ENCODE measurements at regions of chr17 and their contacts with region 1.

Region 1: GRCh38 chr17:59846394-59847165 is 46.2 kb downstream of the TUBD1 start:
- DNase-seq: peak; percentile 91
- H3K4me3 Mint-ChIP-seq: peak overlapping the region; percentile 50
- H3K27ac Mint-ChIP-seq: peak overlapping the region; percentile 98
- H3K4me1 Mint-ChIP-seq: peaks cover 26% of the 10 kb centered on the region
- H3K27me3 Mint-ChIP-seq: no peaks in the 10 kb centered on the region
- CTCF ChIP-seq: no peak

Region 2: GRCh38 chr17:59707114-59707970 is 139.2 kb before region 1 on chr17 and contains the starts of genes PTRH2 and VMP1:
- CTCF ChIA-PET with region 1: interaction called, 3 read pairs
- POLR2A ChIA-PET with region 1: interaction called, 26 read pairs
- intact Hi-C with region 1: loop called (anchors 5 kb)
- DNase-seq: peak; percentile 99
- H3K4me3 Mint-ChIP-seq: peak within 1 kb of the TSS; percentile 94
- H3K27ac Mint-ChIP-seq: peak within 1 kb of the TSS; percentile 99
- H3K4me1 Mint-ChIP-seq: peaks cover 21% of the 10 kb centered on the region
- H3K27me3 Mint-ChIP-seq: no peaks in the 10 kb centered on the region
- CTCF ChIP-seq: no peak
- total RNA-seq, gene PTRH2: 47.5 and 51.7 TPM in 2 replicates
- total RNA-seq, gene VMP1: 205 and 228 TPM in 2 replicates

Region 3: GRCh38 chr17:59746849-59747445 is 99.6 kb before region 1 on chr17:
- CTCF ChIA-PET with region 1: interaction called, 81 read pairs
- POLR2A ChIA-PET with region 1: no interaction called
- intact Hi-C with region 1: no loop called
- DNase-seq: peak; percentile 50
- H3K4me3 Mint-ChIP-seq: no peak overlapping the region
- H3K27ac Mint-ChIP-seq: no peak overlapping the region
- H3K4me1 Mint-ChIP-seq: no peaks in the 10 kb centered on the region
- H3K27me3 Mint-ChIP-seq: no peaks in the 10 kb centered on the region
- CTCF ChIP-seq: peak; percentile 58

Region 4: GRCh38 chr17:59769891-59770290 is 76.7 kb before region 1 on chr17:
- CTCF ChIA-PET with region 1: interaction called, 4 read pairs
- POLR2A ChIA-PET with region 1: interaction called, 135 read pairs
- intact Hi-C with region 1: no loop called
- DNase-seq: peak; percentile 61
- H3K4me3 Mint-ChIP-seq: no peak overlapping the region
- H3K27ac Mint-ChIP-seq: peak overlapping the region; percentile 75
- H3K4me1 Mint-ChIP-seq: no peaks in the 10 kb centered on the region
- H3K27me3 Mint-ChIP-seq: no peaks in the 10 kb centered on the region
- CTCF ChIP-seq: no peak

Region 5: GRCh38 chr17:59829217-59830006 is 17.2 kb before region 1 on chr17:
- CTCF ChIA-PET with region 1: no interaction called
- POLR2A ChIA-PET with region 1: interaction called, 121 read pairs
- intact Hi-C with region 1: no loop called
- DNase-seq: peak; percentile 98
- H3K4me3 Mint-ChIP-seq: peak overlapping the region; percentile 61
- H3K27ac Mint-ChIP-seq: peak overlapping the region; percentile 94
- H3K4me1 Mint-ChIP-seq: peaks cover 24% of the 10 kb centered on the region
- H3K27me3 Mint-ChIP-seq: no peaks in the 10 kb centered on the region
- CTCF ChIP-seq: no peak

Region 6: GRCh38 chr17:59859444-59860025 is 13.0 kb after region 1 on chr17:
- CTCF ChIA-PET with region 1: interaction called, 11 read pairs
- POLR2A ChIA-PET with region 1: interaction called, 8 read pairs
- intact Hi-C with region 1: no loop called
- DNase-seq: peak; percentile 44
- H3K4me3 Mint-ChIP-seq: no peak overlapping the region
- H3K27ac Mint-ChIP-seq: no peak overlapping the region
- H3K4me1 Mint-ChIP-seq: peaks cover 5% of the 10 kb centered on the region
- H3K27me3 Mint-ChIP-seq: no peaks in the 10 kb centered on the region
- CTCF ChIP-seq: peak; percentile 56

Region 7: DNA sequence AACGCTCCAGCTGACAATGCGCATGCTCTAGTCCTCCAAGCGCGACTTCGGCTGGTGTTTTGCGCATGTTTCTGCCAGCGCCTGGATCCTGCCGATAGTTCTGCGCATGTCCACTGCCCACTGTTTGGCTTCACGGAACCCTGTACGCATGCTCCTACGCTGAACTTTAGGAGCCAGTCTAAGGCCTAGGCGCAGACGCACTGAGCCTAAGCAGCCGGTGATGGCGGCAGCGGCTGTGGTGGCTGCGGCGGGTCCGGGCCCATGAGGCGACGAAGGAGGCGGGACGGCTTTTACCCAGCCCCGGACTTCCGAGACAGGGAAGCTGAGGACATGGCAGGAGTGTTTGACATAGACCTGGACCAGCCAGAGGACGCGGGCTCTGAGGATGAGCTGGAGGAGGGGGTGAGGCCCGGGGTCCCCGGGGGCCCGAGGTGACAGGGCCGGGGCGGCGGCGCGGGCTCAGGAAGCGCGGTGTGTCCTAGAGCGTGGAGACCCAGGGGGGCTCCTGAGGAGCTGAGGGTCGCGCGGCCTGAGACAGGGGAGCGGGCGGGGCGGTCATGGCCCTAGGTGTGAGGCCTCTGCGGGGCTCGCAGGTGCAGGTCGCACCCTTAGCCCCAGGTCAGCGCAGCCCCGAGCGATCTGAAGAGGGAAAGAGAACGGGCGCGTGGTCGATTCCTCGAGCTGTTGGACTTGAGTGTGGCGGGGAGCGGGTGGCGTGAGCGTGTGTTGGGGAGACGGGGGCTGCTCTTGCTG is 46.5 kb after region 1 on chr17 and contains the starts of genes RPS6KB1 and TUBD1:
- CTCF ChIA-PET with region 1: no interaction called
- POLR2A ChIA-PET with region 1: interaction called, 24 read pairs
- intact Hi-C with region 1: loop called (anchors 5 kb)
- DNase-seq: peak; percentile 98
- H3K4me3 Mint-ChIP-seq: peak within 1 kb of the TSS; percentile 94
- H3K27ac Mint-ChIP-seq: peak within 1 kb of the TSS; percentile 99
- H3K4me1 Mint-ChIP-seq: peaks cover 9% of the 10 kb centered on the region
- H3K27me3 Mint-ChIP-seq: no peaks in the 10 kb centered on the region
- CTCF ChIP-seq: no peak
- total RNA-seq, gene RPS6KB1: 37.4 and 48.4 TPM in 2 replicates
- total RNA-seq, gene TUBD1: 4.4 and 5.2 TPM in 2 replicates